Activated T-helper 2 cell treated with anti-CD3 and anti-CD28 coated beads, Interferon-gamma antibody, Interleukin-2, Interleukin-4, amounts not matched to agents 10 μg/mL and 5 μg/mL and 100 μg/mL, durations not matched to agents 14 hours and 24 hours and 36 hours (primary cell): ENCODE measurements at regions of chr4 and their contacts with region 1.

Region 1: DNA sequence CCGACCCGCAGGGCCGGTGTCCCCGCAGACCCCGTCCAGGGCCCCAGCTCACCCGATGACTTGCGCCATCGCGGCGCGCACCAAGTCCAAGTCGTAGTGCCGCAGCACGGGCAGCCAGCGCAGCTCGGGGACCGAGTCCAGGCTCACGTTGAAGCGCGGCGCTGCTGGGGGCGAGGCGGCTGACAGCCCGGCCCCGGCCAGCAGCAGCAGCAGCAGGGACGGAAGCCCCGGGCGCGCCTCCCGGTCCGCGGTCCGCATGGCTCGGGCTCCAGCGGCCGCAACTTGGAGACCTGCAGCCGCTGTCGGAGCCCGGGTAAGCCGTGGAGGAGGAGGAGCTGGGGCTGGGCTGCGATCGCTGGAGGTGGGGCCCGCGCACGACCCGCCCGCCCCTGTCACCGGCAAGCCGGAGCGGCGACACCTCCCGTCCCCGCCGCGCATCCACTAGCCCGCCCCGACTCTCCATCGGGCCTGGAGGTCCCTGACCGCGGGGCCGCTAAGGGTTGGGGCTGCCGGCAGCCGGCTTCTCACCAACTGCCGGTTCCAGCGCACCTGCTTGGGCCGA is at the start of gene NAAA:
- DNase-seq: peak; percentile 84
- H3K4me3 Mint-ChIP-seq: peak within 1 kb of the TSS; percentile 97
- H3K27ac Mint-ChIP-seq: peak within 1 kb of the TSS; percentile 94
- H3K4me1 Mint-ChIP-seq: peaks cover 8% of the 10 kb centered on the region
- H3K27me3 Mint-ChIP-seq: no peaks in the 10 kb centered on the region
- total RNA-seq, gene NAAA: 30.8 and 33.9 TPM in 2 replicates

Region 2: DNA sequence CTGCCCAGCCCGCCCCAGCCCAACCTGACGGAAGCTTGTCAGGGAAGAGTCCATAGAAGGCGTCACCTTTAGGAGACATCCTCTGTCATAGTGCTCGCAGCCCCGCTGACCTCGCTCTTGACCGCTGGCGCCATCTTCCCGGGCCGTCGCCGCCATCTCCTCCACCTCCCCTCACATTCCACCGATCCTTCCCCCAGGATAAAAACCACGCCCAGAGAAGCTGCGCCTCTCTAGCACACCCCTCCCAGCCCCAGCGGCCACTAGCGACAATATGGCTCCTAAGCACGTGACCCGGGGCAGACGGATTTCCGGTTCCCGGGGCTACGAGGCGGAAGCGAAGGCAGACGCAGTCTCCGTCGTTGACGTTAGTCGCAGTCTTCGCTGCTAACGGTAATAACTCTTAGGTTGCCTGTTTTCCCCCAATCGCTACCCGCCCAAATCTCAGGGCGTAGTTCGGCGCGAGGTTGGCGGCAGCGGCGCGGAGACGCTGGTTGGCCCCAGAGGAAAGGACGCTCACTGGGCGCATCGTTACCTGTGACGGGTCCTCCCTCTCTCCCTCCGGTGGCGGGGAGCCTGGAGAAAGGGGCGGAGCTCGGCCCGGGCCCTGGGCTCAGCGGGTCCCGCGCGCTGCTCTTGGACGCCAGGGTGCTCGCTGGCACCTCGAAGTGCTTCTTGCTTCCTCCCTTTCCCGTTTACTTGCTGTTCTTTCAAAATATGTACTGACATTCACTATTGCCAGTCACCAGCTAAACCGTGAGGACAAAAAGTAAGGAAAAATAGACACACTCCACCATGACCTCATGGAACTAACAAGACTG is 426.4 kb before region 1 on chr4 and contains the starts of genes RCHY1 and THAP6:
- intact Hi-C with region 1: loop called (anchors 2 kb)
- DNase-seq: peak; percentile 91
- H3K4me3 Mint-ChIP-seq: no peak within 1 kb of the TSS
- H3K27ac Mint-ChIP-seq: peak within 1 kb of the TSS; percentile 98
- H3K4me1 Mint-ChIP-seq: peaks cover 35% of the 10 kb centered on the region
- H3K27me3 Mint-ChIP-seq: no peaks in the 10 kb centered on the region
- total RNA-seq, gene RCHY1: 22.9 and 25.4 TPM in 2 replicates
- total RNA-seq, gene THAP6: 17.6 and 18.4 TPM in 2 replicates

Region 3: GRCh38 chr4:75916091-75916661 is 24.6 kb before region 1 on chr4:
- intact Hi-C with region 1: loop called (anchors 2 kb)
- DNase-seq: peak; percentile 18
- H3K4me3 Mint-ChIP-seq: no peak overlapping the region
- H3K27ac Mint-ChIP-seq: no peak overlapping the region
- H3K4me1 Mint-ChIP-seq: peaks cover 1% of the 10 kb centered on the region
- H3K27me3 Mint-ChIP-seq: no peaks in the 10 kb centered on the region

Region 4: GRCh38 chr4:75953509-75953908 is 12.7 kb after region 1 on chr4:
- intact Hi-C with region 1: loop called (anchors 2 kb)
- DNase-seq: no peak
- H3K4me3 Mint-ChIP-seq: no peak overlapping the region
- H3K27ac Mint-ChIP-seq: no peak overlapping the region
- H3K4me1 Mint-ChIP-seq: peaks cover 15% of the 10 kb centered on the region
- H3K27me3 Mint-ChIP-seq: no peaks in the 10 kb centered on the region

Region 5: DNA sequence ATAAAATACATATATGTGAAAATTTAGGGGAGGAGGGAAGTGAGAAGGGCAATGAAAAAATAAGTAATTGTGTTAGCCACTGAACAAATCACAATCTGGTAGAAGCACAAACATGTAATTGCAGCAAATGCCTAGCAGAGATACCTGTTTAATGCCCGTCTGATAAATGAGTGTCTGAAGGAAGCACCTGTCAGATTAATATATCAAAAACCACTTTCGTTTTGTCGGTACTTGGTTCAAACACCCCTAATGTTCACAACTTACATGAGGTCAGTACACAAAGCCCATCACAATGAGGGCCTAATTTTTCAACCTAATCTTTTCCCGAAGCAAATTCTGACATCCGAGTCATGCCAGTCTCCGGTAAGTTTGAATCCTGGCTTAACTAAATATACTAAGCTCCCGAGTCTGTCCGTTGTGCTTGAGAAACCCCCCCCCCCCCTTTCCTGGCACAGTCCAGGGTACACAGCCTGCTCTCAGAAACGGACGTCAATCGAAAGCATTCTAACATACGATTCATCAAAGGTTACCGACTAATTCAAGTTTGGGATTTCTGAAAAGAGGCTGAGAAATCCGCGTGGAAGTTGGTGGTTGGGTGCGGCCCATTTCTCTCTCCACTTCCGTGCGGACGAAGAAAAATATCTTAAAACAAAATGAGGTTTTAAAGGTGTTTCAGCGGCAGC is 49.2 kb after region 1 on chr4:
- intact Hi-C with region 1: loop called (anchors 2 kb)
- DNase-seq: no peak
- H3K4me3 Mint-ChIP-seq: peak overlapping the region; percentile 87
- H3K27ac Mint-ChIP-seq: peak overlapping the region; percentile 62
- H3K4me1 Mint-ChIP-seq: peaks cover 25% of the 10 kb centered on the region
- H3K27me3 Mint-ChIP-seq: no peaks in the 10 kb centered on the region

Region 6: GRCh38 chr4:76055016-76055415 is 114.2 kb after region 1 on chr4:
- intact Hi-C with region 1: loop called (anchors 1 kb)
- DNase-seq: no peak
- H3K4me3 Mint-ChIP-seq: no peak overlapping the region
- H3K27ac Mint-ChIP-seq: no peak overlapping the region
- H3K4me1 Mint-ChIP-seq: peaks cover 40% of the 10 kb centered on the region
- H3K27me3 Mint-ChIP-seq: no peaks in the 10 kb centered on the region

Region 7: DNA sequence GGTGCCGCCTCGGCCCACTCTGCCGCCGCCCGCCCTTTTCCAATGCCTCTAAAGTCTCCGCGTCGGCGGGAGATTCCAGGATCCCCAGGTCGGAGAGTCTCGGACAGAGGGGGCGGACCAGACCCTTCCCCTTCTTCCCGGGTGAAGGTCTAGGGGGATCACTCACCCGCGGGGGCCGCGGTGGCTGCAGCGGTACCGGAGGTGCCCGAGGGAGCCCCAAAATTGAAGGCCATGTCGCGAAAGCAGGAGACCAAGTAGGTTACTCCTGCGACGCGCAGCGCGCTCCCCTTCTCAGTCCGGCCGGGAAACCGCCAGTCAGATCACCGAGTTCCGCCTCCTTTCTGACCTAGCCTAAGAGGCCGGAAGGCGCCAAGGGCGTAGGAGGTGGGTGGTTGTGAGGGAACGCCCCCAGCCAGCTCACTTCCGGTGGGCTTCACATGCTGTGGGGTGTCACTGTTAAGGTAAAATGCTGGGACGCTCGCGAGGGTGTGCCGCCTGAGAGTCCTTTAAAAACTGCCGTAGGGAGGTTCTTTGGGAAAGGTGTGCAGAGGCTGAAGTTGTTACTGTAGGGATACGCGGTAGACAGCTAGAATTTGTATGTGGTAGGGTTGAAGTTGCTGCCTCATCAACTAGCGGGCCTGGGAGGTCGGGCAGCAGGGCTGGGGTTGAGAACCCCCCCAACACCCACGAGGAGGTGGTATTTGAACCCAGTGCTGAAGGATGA is 207.5 kb after region 1 on chr4 and contains the start of gene NUP54:
- intact Hi-C with region 1: loop called (anchors 2 kb)
- DNase-seq: peak; percentile 94
- H3K4me3 Mint-ChIP-seq: peak within 1 kb of the TSS; percentile 89
- H3K27ac Mint-ChIP-seq: peak within 1 kb of the TSS; percentile 94
- H3K4me1 Mint-ChIP-seq: peaks cover 23% of the 10 kb centered on the region
- H3K27me3 Mint-ChIP-seq: no peaks in the 10 kb centered on the region
- total RNA-seq, gene NUP54: 74.7 and 75.6 TPM in 2 replicates